ENCODE measurements at regions of chr18 and their contacts with region 1.

Region 1: DNA sequence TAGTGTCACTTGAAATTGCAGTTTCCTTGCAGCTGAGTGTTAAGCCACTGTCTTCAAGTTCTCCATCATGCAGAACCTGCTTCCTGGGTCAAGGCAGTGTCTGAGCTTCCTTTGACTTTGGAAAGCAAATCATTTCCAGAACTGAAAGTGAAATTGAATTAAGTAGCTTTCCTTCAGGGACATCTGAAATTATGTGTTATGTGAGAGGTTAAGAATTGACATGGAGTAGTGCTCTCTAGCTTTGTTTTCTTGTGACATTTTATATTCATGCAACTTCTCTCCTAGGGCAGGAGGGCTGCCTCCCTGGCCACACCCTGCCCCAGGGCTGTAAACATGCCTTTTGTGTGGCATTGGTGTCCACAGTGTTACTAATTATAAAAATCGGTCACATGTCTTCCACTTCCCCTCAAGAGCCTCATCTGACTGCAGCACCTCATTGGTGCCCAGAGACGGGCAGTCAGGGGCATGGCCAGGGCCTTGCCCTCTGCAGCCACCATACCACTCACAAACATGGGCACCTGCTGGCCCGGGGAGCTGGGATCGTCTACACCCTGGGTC is 14.4 kb downstream of the RAB12 start:
- DNase-seq: no peak
- ATAC-seq: no peak
- H3K4me3 Mint-ChIP-seq: peak overlapping the region; percentile 58
- H3K27ac Mint-ChIP-seq: peak overlapping the region; percentile 94
- H3K4me1 Mint-ChIP-seq: peaks cover 93% of the 10 kb centered on the region
- H3K27me3 Mint-ChIP-seq: no peaks in the 10 kb centered on the region
- CTCF ChIP-seq: no peak

Region 2: GRCh38 chr18:8367217-8367988 is 256.2 kb before region 1 on chr18:
- CTCF ChIA-PET with region 1: no interaction called
- POLR2A ChIA-PET with region 1: no interaction called
- DNase-seq: peak; percentile 82
- ATAC-seq: peak; percentile 90
- H3K4me3 Mint-ChIP-seq: peak overlapping the region; percentile 61
- H3K27ac Mint-ChIP-seq: no peak overlapping the region
- H3K4me1 Mint-ChIP-seq: peaks cover 18% of the 10 kb centered on the region
- H3K27me3 Mint-ChIP-seq: peaks cover 12% of the 10 kb centered on the region
- CTCF ChIP-seq: no peak

Region 3: GRCh38 chr18:8608795-8609658 is 14.6 kb before region 1 on chr18 and contains the start of gene RAB12:
- CTCF ChIA-PET with region 1: interaction called, 22 read pairs
- POLR2A ChIA-PET with region 1: interaction called, 4 read pairs
- DNase-seq: peak; percentile 85
- ATAC-seq: peak; percentile 85
- H3K4me3 Mint-ChIP-seq: peak within 1 kb of the TSS; percentile 86
- H3K27ac Mint-ChIP-seq: peak within 1 kb of the TSS; percentile 72
- H3K4me1 Mint-ChIP-seq: peaks cover 56% of the 10 kb centered on the region
- H3K27me3 Mint-ChIP-seq: peaks cover 13% of the 10 kb centered on the region
- CTCF ChIP-seq: peak; percentile 78
- total RNA-seq, gene RAB12: 56.1 to 69.3 TPM (median 58.1 TPM) in 3 replicates

Measured in WTC11 (cell line).